ENCODE measurements at regions of chr1 and their contacts with region 1.

Region 1: GRCh38 chr1:182789138-182790076 is at the start of gene NPL:
- DNase-seq: peak; percentile 17
- H3K4me3 ChIP-seq: peak within 1 kb of the TSS; percentile 56 to 97 (median 64)
- H3K27ac ChIP-seq: peak within 1 kb of the TSS; percentile 80 to 89 (median 84)
- H3K4me1 ChIP-seq: peaks cover 3 to 40% (median 13%) of the 10 kb centered on the region in 3 donors
- H3K27me3 ChIP-seq: no peaks in the 10 kb centered on the region
- CTCF ChIP-seq: peak in 2 of 6 experiments; percentile 11 to 20
- POLR2A ChIP-seq: peak in 2 of 4 donors; percentile 90 to 92
- total RNA-seq, gene NPL: 7.8 to 16.2 (median 12.6) TPM

Region 2: GRCh38 chr1:182601416-182601786 is 188.0 kb before region 1 on chr1:
- intact Hi-C with region 1: loop called (anchors 2 kb)
- DNase-seq: no peak
- H3K4me3 ChIP-seq: peak overlapping the region in 2 of 4 donors; percentile 22 to 50
- H3K27ac ChIP-seq: peak overlapping the region; percentile 12 to 58 (median 28)
- H3K4me1 ChIP-seq: peaks cover 4 to 42% (median 17%) of the 10 kb centered on the region in 3 donors
- H3K27me3 ChIP-seq: no peaks in the 10 kb centered on the region
- CTCF ChIP-seq: peak; percentile 75 to 95 (median 88)
- POLR2A ChIP-seq: no peak

Measured in esophagus squamous epithelium (tissue), 5 donors.